Activated CD8-positive, alpha-beta T cell treated with anti-CD3 and anti-CD28 coated beads for 36 hours (primary cell): ENCODE measurements at regions of chr2 and their contacts with region 1.

Region 1: GRCh38 chr2:196926562-196927375 is at the start of gene PGAP1:
- DNase-seq: peak; percentile 94
- ATAC-seq: peak; percentile 89
- H3K4me3 Mint-ChIP-seq: peak within 1 kb of the TSS; percentile 90
- H3K27ac Mint-ChIP-seq: peak within 1 kb of the TSS; percentile 99
- H3K4me1 Mint-ChIP-seq: peaks cover 30% of the 10 kb centered on the region
- H3K27me3 Mint-ChIP-seq: no peaks in the 10 kb centered on the region
- CTCF ChIP-seq: no peak
- total RNA-seq, gene PGAP1: 17.7 to 19.2 TPM

Region 2: DNA sequence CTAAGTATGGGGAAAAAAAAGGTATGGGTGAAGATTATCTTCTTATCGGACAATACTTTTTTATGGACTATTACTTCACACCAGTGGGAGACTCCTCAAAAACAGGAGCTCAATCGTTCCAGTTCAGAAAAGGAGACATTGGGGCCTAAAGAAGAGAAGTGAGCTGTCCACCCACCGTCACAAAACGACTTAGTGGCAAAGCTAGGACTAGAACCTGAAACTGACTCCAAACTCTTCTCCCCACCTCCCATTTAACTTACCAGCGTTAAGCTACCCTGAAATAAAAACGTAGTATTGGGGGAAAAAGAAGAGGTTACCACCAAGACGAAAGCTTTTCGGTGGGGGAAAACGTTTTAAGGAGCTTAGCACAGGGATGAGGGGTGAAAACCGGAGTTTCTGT is 127.8 kb before region 1 on chr2:
- CTCF ChIA-PET with region 1: no interaction called
- POLR2A ChIA-PET with region 1: interaction called, 12 read pairs
- intact Hi-C with region 1: no loop called
- DNase-seq: no peak
- ATAC-seq: no peak
- H3K4me3 Mint-ChIP-seq: peak overlapping the region; percentile 98
- H3K27ac Mint-ChIP-seq: peak overlapping the region; percentile 98
- H3K4me1 Mint-ChIP-seq: peaks cover 35% of the 10 kb centered on the region
- H3K27me3 Mint-ChIP-seq: peaks cover 2% of the 10 kb centered on the region
- CTCF ChIP-seq: no peak

Region 3: DNA sequence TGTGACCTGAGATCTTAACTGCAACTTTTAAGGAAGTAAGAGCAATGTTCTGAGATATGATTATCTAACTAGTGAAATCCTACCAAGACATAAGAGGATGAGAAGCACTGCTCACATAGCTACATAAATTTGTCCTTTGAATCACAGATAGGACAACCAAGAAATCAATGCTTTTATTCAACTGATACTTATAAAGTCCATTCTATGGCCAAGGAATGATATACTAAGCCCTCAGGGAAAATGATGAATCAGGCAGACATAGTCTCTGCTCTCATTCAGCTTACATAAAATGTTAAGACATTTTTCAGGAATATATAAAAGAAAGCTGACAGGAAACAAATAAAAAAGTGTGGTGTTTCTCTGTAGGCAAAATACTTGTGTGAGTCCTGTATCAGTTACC is 39.3 kb before region 1 on chr2:
- CTCF ChIA-PET with region 1: no interaction called
- POLR2A ChIA-PET with region 1: no interaction called
- intact Hi-C with region 1: no loop called
- DNase-seq: no peak
- ATAC-seq: no peak
- H3K4me3 Mint-ChIP-seq: no peak overlapping the region
- H3K27ac Mint-ChIP-seq: no peak overlapping the region
- H3K4me1 Mint-ChIP-seq: no peaks in the 10 kb centered on the region
- H3K27me3 Mint-ChIP-seq: no peaks in the 10 kb centered on the region
- CTCF ChIP-seq: no peak

Region 4: DNA sequence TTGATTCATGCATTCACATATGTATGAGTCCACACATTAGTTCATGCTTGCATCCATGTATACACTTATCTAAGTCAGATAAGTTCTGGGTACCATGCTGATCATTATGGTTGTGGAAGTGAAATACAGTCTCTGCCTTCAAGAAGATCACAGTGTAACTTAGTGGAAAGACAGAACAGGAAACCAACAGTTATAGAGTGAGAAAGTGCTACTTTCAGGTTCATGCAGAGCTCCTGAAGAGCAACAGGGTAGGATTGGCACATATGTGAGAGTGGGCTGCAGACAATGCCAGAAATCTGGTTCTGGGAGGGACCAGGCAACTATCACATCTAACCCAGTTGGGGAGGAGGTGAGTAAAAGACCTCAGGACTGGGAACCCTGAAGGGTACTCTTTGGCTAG is 35.1 kb after region 1 on chr2:
- CTCF ChIA-PET with region 1: interaction called, 3 read pairs
- POLR2A ChIA-PET with region 1: interaction called, 10 read pairs
- intact Hi-C with region 1: loop called (anchors 5 kb)
- DNase-seq: peak; percentile 16
- ATAC-seq: peak; percentile 84
- H3K4me3 Mint-ChIP-seq: no peak overlapping the region
- H3K27ac Mint-ChIP-seq: peak overlapping the region; percentile 62
- H3K4me1 Mint-ChIP-seq: peaks cover 23% of the 10 kb centered on the region
- H3K27me3 Mint-ChIP-seq: no peaks in the 10 kb centered on the region
- CTCF ChIP-seq: no peak

Region 5: GRCh38 chr2:196987649-196988364 is 61.0 kb after region 1 on chr2:
- CTCF ChIA-PET with region 1: no interaction called
- POLR2A ChIA-PET with region 1: interaction called, 14 read pairs
- intact Hi-C with region 1: loop called (anchors 5 kb)
- DNase-seq: peak; percentile 69
- ATAC-seq: peak; percentile 94
- H3K4me3 Mint-ChIP-seq: peak overlapping the region; percentile 21
- H3K27ac Mint-ChIP-seq: peak overlapping the region; percentile 88
- H3K4me1 Mint-ChIP-seq: peaks cover 67% of the 10 kb centered on the region
- H3K27me3 Mint-ChIP-seq: no peaks in the 10 kb centered on the region
- CTCF ChIP-seq: no peak